Common myeloid progenitor, CD34-positive (primary cell): ENCODE measurements at regions of chr11 and their contacts with region 1.

Region 1: DNA sequence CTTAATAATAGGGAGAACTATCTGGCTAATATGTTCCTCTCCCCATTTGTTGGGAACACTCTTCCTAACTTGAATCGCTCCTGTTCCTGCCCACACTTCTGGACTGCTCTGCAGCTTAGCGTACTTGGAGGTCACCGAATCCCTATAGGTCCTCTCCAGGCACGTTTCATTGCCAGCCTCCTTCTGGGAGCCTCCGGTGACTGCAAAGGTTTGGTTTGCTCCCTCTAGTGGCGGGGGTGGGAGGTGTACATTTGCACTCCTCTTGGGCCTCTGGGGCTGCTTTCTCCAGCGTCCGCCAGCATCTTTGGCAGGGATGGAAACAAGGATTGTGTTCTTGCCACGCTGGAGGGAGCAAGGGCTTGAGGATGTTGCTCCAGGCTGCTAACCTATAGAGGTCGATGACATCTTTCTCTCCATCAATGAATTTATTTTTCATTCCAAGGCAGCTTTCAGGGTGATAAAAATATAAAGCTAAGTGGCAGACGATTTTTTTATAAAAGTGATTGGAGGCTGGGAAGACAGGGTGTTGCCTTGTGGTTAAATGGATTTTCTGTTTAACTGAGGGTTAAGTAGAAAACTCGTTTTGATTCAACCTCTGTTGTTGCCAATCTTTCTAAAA is 48.7 kb downstream of the TSPAN18 start:
- DNase-seq: peak; percentile 64 to 74 (median 67)
- H3K4me3 ChIP-seq: no peak overlapping the region
- H3K27ac ChIP-seq: no peak overlapping the region
- H3K4me1 ChIP-seq: no peaks in the 10 kb centered on the region
- H3K27me3 ChIP-seq: peaks cover 0 to 8% (median 0%) of the 10 kb centered on the region in 5 experiments

Region 2: DNA sequence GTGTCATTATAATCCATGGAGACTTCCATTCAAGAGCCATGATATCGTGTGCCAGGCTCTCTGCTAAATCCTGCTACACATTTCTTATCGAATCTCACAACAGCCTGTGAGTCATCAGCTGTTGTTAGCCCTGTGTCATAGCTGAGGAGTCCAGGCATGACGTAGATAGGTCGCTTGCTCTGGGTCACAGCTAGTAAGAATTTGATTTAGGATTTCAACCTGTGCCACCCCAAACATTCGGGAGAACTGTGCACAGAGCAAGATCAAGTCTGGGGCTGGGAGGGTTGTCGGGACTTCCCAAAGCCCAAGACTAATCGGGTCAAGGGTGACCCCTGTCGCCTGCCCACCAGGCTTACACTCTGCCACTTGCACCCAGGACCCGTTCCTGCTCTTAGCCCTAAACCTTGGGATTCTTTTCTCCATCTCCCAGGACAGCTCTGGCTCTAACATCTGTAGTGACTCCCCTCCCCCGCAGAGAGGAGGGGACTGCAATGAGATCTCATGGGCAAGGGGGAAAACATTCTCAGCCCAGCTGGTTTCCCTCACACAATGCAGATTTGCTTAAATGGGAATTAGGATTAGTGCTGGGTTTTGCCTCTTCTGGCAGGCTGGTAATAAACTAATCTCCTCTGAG is 14.4 kb before region 1 on chr11:
- CTCF ChIA-PET with region 1: interaction called, 60 read pairs
- POLR2A ChIA-PET with region 1: no interaction called
- DNase-seq: no peak
- H3K4me3 ChIP-seq: no peak overlapping the region
- H3K27ac ChIP-seq: no peak overlapping the region
- H3K4me1 ChIP-seq: no peaks in the 10 kb centered on the region
- H3K27me3 ChIP-seq: no peaks in the 10 kb centered on the region

Region 3: GRCh38 chr11:44785856-44786606 is 10.6 kb after region 1 on chr11:
- CTCF ChIA-PET with region 1: interaction called, 47 read pairs
- POLR2A ChIA-PET with region 1: no interaction called
- DNase-seq: peak in 2 of 3 donors; percentile 25 to 31
- H3K4me3 ChIP-seq: no peak overlapping the region
- H3K27ac ChIP-seq: no peak overlapping the region
- H3K4me1 ChIP-seq: peaks cover 4 to 18% (median 7%) of the 10 kb centered on the region in 4 experiments
- H3K27me3 ChIP-seq: peaks cover 0 to 2% (median 0%) of the 10 kb centered on the region in 5 experiments